ENCODE measurements at regions of chr7 and their contacts with region 1.

Region 1: GRCh38 chr7:37901236-37901827 is 15.3 kb downstream of the SFRP4 start:
- DNase-seq: no peak
- H3K4me3 ChIP-seq: no peak overlapping the region
- H3K27ac ChIP-seq: no peak overlapping the region
- H3K4me1 ChIP-seq: no peaks in the 10 kb centered on the region
- H3K27me3 ChIP-seq: no peaks in the 10 kb centered on the region
- CTCF ChIP-seq: peak; percentile 32 to 79 (median 72)

Region 2: DNA sequence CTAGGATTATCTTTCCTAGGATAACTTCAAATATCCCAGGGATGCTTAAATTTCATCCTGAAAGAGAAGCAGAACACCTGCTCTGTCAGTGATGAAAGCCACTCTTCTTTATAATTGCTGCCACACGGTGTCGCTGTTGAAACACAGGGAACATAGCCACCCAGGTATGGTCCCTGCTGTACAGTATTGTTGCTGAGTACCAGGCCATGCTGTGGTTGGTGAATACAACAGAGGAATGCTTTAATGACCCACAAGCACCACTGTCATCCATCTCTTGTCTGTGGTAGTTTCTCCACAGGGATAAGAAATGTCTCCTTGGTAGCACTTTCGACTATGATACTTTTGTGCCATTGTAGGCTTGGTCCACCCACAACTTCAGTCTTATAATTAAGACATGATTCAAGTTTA is 206.2 kb after region 1 on chr7:
- intact Hi-C with region 1: loop called (anchors 2 kb)
- DNase-seq: peak in 1 of 2 donors; percentile 78
- H3K4me3 ChIP-seq: no peak overlapping the region
- H3K27ac ChIP-seq: no peak overlapping the region
- H3K4me1 ChIP-seq: no peaks in the 10 kb centered on the region
- H3K27me3 ChIP-seq: no peaks in the 10 kb centered on the region
- CTCF ChIP-seq: peak; percentile 33 to 81 (median 67)

Region 3: DNA sequence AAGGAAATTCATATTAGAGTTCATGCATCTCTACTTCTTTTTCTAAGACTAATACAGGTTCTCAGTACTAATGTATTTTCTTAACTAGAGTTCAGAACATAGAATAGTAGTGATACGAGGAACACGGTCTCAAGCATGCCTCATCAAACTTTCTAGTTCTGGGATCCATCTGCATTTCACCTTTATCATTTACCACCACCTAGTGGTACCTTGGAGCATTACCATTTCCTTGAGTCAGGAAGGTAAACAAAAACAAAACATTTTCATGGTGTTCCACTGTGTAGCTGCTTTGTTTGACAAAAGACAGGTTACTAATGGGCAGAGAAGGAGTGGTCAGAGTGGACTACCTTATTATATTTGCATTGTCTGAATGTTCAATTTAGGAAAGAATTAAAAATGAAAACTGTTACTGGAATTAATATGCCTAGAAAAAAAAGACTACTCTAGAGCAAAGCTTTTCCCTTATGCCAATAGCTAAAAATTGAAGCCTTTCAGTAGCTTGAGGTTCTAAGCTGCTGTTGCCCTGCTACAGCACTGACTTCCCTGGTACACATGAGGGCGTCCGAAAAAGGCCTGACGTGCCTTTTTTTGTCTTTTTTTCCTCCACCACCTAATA is 321.3 kb after region 1 on chr7:
- intact Hi-C with region 1: loop called (anchors 1 kb)
- DNase-seq: no peak
- H3K4me3 ChIP-seq: no peak overlapping the region
- H3K27ac ChIP-seq: peak overlapping the region; percentile 29 to 56
- H3K4me1 ChIP-seq: no peaks in the 10 kb centered on the region
- H3K27me3 ChIP-seq: no peaks in the 10 kb centered on the region
- CTCF ChIP-seq: peak; percentile 65 to 92 (median 76)

Measured in ascending aorta (tissue), 2 donors.